CD4-positive, alpha-beta memory T cell (primary cell): ENCODE measurements at regions of chr9 and their contacts with region 1.

Region 1: GRCh38 chr9:35732122-35732799 is at the starts of genes CREB3 and TLN1:
- DNase-seq: peak; percentile 96 to 98 (median 98)
- H3K4me3 ChIP-seq: peak within 1 kb of the TSS; percentile 84 to 95
- H3K4me3 Mint-ChIP-seq: peak within 1 kb of the TSS; percentile 89 to 97 (median 94)
- H3K27ac ChIP-seq: peak within 1 kb of the TSS; percentile 92
- H3K27ac Mint-ChIP-seq: peak within 1 kb of the TSS in 6 of 7 donors; percentile 94 to 97 (median 96)
- H3K4me1 ChIP-seq: peaks cover 66% of the 10 kb centered on the region
- H3K4me1 Mint-ChIP-seq: peaks cover 18 to 32% (median 24%) of the 10 kb centered on the region in 4 donors
- H3K27me3 ChIP-seq: no peaks in the 10 kb centered on the region
- H3K27me3 Mint-ChIP-seq: no peaks in the 10 kb centered on the region
- total RNA-seq, gene CREB3: 24.8 to 25.6 TPM
- total RNA-seq, gene TLN1: 294 to 316 TPM

Region 2: GRCh38 chr9:34665381-34666250 is 1066.6 kb before region 1 on chr9:
- CTCF ChIA-PET with region 1: no interaction called
- POLR2A ChIA-PET with region 1: no interaction called
- intact Hi-C with region 1: loop called (anchors 10 kb)
- DNase-seq: peak; percentile 87 to 94 (median 89)
- H3K4me3 ChIP-seq: peak overlapping the region; percentile 75 to 95
- H3K4me3 Mint-ChIP-seq: peak overlapping the region; percentile 85 to 97 (median 93)
- H3K27ac ChIP-seq: peak overlapping the region; percentile 98
- H3K27ac Mint-ChIP-seq: peak overlapping the region; percentile 95 to 99 (median 99)
- H3K4me1 ChIP-seq: peaks cover 59% of the 10 kb centered on the region
- H3K4me1 Mint-ChIP-seq: peaks cover 41 to 65% (median 53%) of the 10 kb centered on the region in 4 donors
- H3K27me3 ChIP-seq: no peaks in the 10 kb centered on the region
- H3K27me3 Mint-ChIP-seq: no peaks in the 10 kb centered on the region

Region 3: DNA sequence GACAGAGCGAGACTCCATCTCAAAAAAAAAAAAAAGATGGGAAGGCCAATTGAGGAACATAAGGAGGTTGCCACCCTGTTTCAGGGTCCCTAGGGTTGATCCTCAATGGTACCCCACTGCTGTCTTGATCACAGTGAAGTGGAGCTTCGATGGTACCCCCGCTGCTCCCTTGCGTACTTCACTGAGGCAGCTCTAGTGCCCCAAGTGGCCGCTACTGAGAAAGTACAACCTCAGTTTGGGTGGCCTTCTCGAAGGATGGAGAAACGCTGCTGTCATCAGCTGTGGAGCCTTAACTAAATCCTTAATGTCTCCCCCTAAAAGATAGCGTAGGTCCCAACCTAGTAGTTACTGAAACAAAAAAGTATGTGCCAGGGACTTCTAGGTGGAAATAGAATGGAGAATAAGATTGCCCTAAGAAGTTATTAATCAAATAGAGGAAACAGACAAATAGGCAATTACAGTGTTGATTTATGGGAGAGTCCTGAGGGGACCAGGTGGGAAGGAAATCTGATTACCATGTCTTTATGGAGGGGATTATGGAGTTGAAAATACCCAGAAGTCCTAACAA is 120.9 kb before region 1 on chr9:
- CTCF ChIA-PET with region 1: interaction called, 53 read pairs
- POLR2A ChIA-PET with region 1: interaction called, 45 read pairs
- intact Hi-C with region 1: no loop called
- DNase-seq: peak; percentile 45 to 63 (median 49)
- H3K4me3 ChIP-seq: no peak overlapping the region
- H3K4me3 Mint-ChIP-seq: peak overlapping the region in 1 of 8 donors; percentile 26
- H3K27ac ChIP-seq: no peak overlapping the region
- H3K27ac Mint-ChIP-seq: peak overlapping the region in 5 of 7 donors; percentile 4 to 83 (median 59)
- H3K4me1 ChIP-seq: peaks cover 19% of the 10 kb centered on the region
- H3K4me1 Mint-ChIP-seq: peaks cover 13 to 43% (median 20%) of the 10 kb centered on the region in 4 donors
- H3K27me3 ChIP-seq: no peaks in the 10 kb centered on the region
- H3K27me3 Mint-ChIP-seq: no peaks in the 10 kb centered on the region

Region 4: GRCh38 chr9:35657546-35658136 is 74.6 kb before region 1 on chr9 and contains the start of gene RMRP:
- CTCF ChIA-PET with region 1: interaction called, 249 read pairs
- POLR2A ChIA-PET with region 1: interaction called, 162 read pairs
- intact Hi-C with region 1: loop called (anchors 1 kb)
- DNase-seq: peak; percentile 91 to 96 (median 93)
- H3K4me3 ChIP-seq: peak within 1 kb of the TSS; percentile 67 to 90
- H3K4me3 Mint-ChIP-seq: peak within 1 kb of the TSS; percentile 86 to 95 (median 92)
- H3K27ac ChIP-seq: peak within 1 kb of the TSS; percentile 96
- H3K27ac Mint-ChIP-seq: peak within 1 kb of the TSS; percentile 95 to 100 (median 99)
- H3K4me1 ChIP-seq: peaks cover 64% of the 10 kb centered on the region
- H3K4me1 Mint-ChIP-seq: peaks cover 52 to 78% (median 64%) of the 10 kb centered on the region in 4 donors
- H3K27me3 ChIP-seq: no peaks in the 10 kb centered on the region
- H3K27me3 Mint-ChIP-seq: peaks cover 2 to 4% of the 10 kb centered on the region in 2 donors
- total RNA-seq, gene RMRP: 18,678 to 21,585 TPM

Region 5: DNA sequence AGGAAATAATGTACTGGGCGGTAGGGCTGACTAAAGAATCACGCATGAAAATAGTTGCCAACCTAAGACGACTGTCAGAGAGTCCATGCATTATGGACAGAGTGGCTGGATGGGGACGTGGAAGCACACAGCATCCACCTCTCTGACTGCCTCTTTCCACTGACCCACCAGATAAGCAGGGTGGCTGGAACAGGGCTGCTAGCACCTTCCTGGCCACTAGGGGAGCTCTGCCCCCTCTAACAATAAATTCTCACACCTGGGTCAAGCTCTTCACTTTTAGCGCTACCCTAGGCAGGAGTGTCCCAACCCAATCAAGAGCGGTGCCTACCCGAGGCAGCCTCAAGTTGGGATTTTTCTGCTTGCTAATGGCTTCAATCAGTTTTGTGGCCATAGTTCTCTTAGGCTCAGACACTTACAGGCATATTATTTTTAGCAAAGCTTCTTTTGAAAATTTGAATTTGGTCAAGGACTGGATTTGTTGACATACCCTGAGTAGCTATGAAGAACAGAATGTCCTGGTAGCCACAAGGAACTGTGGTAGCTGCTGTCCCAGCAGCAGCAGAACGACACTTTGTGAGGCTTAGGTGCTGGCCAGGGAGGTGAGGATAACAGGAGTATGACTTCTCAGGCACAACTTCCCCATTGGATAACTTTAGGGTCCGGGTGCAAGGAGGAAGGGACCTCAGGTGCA is 35.6 kb before region 1 on chr9:
- CTCF ChIA-PET with region 1: interaction called, 118 read pairs
- POLR2A ChIA-PET with region 1: interaction called, 33 read pairs
- intact Hi-C with region 1: loop called (anchors 2 kb)
- DNase-seq: peak in 4 of 5 donors; percentile 42 to 61 (median 52)
- H3K4me3 ChIP-seq: no peak overlapping the region
- H3K4me3 Mint-ChIP-seq: no peak overlapping the region
- H3K27ac ChIP-seq: no peak overlapping the region
- H3K27ac Mint-ChIP-seq: peak overlapping the region; percentile 35 to 89 (median 79)
- H3K4me1 ChIP-seq: peaks cover 9% of the 10 kb centered on the region
- H3K4me1 Mint-ChIP-seq: peaks cover 7 to 15% (median 12%) of the 10 kb centered on the region in 4 donors
- H3K27me3 ChIP-seq: no peaks in the 10 kb centered on the region
- H3K27me3 Mint-ChIP-seq: no peaks in the 10 kb centered on the region

Region 6: DNA sequence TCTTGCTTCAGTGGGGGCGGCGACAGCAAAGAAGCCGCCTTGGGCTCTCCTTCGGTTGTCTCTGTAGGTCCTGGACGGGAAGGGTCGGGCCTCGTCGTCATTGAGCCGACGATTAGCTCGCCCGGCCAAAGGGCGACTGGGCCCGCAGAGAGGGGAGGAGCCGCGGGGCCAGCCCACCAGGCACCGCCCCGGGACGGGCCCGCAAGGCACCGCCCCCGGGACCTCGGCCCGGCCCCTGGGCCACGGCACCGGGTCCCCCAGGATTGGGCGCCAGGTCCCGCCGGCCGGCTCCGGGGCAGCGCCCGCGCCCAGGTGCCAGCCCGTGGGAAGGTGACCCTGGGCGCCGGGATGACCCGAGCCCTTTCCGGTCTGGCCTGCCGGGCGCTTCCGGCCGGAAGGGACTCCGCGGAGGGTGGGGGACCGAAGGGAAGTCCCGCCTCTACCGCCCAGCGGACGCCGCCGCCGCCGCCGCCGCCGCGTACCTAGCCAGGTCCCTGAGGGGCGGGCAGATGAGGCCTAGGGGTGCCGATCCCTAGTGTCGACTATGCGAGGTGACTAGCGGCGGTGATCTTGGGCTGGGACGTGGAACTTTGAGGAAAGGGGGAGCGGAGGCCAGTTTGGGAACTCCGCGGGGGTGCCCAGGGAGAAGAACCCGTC is 16.7 kb after region 1 on chr9 and contains the starts of genes GBA2 and RGP1:
- CTCF ChIA-PET with region 1: interaction called, 209 read pairs
- POLR2A ChIA-PET with region 1: interaction called, 179 read pairs
- intact Hi-C with region 1: loop called (anchors 1 kb)
- DNase-seq: peak; percentile 50 to 71 (median 62)
- H3K4me3 ChIP-seq: peak within 1 kb of the TSS; percentile 89 to 92
- H3K4me3 Mint-ChIP-seq: peak within 1 kb of the TSS; percentile 92 to 97 (median 94)
- H3K27ac ChIP-seq: peak within 1 kb of the TSS; percentile 82
- H3K27ac Mint-ChIP-seq: peak within 1 kb of the TSS; percentile 87 to 97 (median 96)
- H3K4me1 ChIP-seq: peaks cover 45% of the 10 kb centered on the region
- H3K4me1 Mint-ChIP-seq: peaks cover 37 to 73% (median 51%) of the 10 kb centered on the region in 4 donors
- H3K27me3 ChIP-seq: no peaks in the 10 kb centered on the region
- H3K27me3 Mint-ChIP-seq: no peaks in the 10 kb centered on the region
- total RNA-seq, gene GBA2: 61.1 to 66.3 TPM
- total RNA-seq, gene RGP1: 31.8 to 33.8 TPM

Region 7: DNA sequence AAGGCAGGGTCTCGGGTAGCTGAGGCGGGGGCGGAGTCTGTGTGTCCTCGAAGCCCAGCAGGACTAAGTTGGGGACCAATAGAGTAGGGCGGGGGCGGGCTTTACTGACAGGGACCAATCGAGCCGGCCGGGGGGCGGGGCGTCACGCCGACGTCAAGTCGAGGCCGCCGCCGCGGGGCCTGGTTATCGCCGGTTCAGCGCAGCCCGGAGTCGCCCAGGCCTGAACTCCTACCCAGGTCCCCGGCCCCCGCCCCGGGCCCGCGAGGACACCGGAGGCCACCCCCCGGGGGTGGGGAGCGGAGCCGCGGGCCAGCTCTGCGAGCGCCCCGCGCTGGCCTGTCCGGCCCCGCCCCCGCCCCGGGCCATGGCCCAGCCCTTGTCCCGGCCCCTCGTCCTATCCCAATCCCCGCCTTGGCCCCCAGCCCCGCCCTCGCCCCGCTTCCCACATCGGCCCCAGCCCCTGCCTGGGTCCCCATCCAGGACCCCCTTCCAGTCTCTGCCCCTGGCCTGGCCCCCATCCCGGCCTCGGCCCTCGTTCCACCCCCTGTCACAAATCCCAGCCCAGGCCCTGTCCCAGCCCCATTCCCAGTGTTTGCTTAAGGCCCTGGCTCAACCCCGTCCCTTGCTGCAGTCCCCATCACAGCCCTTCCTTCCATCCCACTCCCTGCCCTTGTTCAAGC is 97.0 kb after region 1 on chr9 and contains the start of gene TMEM8B:
- CTCF ChIA-PET with region 1: interaction called, 9 read pairs
- POLR2A ChIA-PET with region 1: interaction called, 6 read pairs
- intact Hi-C with region 1: loop called (anchors 1 kb)
- DNase-seq: peak; percentile 85 to 96 (median 88)
- H3K4me3 ChIP-seq: peak within 1 kb of the TSS; percentile 61 to 70
- H3K4me3 Mint-ChIP-seq: peak within 1 kb of the TSS; percentile 92 to 100 (median 96)
- H3K27ac ChIP-seq: peak within 1 kb of the TSS; percentile 66
- H3K27ac Mint-ChIP-seq: peak within 1 kb of the TSS; percentile 74 to 99 (median 98)
- H3K4me1 ChIP-seq: peaks cover 20% of the 10 kb centered on the region
- H3K4me1 Mint-ChIP-seq: peaks cover 23 to 39% (median 35%) of the 10 kb centered on the region in 4 donors
- H3K27me3 ChIP-seq: no peaks in the 10 kb centered on the region
- H3K27me3 Mint-ChIP-seq: no peaks in the 10 kb centered on the region
- total RNA-seq, gene TMEM8B: 7.4 to 10.5 TPM